BJ (cell line): ENCODE measurements at regions of chr18 and their contacts with region 1.

Region 1: GRCh38 chr18:36296650-36297416 is 680 bp upstream of the FHOD3 start:
- DNase-seq: no peak
- H3K4me3 ChIP-seq: peak overlapping the region; percentile 68
- H3K27me3 ChIP-seq: no peaks in the 10 kb centered on the region
- CTCF ChIP-seq: peak; percentile 71

Region 2: DNA sequence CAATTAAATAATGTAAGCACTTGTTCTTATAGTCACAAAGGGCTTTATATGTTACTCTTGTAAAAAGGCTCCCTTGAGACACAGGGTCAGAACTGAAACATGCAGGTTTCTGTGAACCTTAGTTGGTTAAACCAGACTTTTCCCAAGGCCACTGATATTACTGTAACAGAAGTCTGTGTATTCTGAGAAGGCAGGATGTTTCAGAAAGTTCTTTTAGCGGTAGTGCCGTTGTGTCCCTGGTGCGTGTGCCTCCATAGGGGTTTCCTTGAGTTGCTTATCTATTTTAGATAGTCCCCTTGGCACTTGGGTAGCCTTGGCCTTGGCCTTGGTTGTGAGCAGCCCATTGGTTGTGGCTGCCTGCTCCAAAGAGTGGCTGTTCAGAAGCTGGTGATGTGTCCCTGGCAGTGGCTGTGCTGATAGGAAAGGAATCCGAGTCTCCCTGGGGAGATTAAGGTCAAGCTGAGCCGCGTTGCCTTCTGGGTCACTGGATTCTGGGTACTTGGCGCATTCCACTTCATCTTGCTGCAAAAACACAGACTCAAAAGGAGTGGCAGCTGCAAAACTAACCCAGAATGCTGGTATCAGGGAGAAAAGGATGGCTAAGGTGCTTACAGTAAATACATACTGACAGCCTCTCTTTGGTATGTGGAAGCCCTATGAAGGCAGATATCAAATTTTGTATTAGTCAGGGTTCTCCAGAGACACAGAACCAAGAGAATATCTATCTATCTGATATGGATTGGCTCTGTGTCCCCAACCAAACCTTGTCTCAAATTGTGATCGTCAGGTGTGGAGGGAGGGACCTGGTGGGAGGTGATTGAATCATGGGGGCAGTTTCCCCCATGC is 70.4 kb after region 1 on chr18:
- CTCF ChIA-PET with region 1: no interaction called
- POLR2A ChIA-PET with region 1: interaction called, 18 read pairs
- DNase-seq: no peak
- H3K4me3 ChIP-seq: no peak overlapping the region
- H3K27me3 ChIP-seq: no peaks in the 10 kb centered on the region
- CTCF ChIP-seq: no peak

Region 3: DNA sequence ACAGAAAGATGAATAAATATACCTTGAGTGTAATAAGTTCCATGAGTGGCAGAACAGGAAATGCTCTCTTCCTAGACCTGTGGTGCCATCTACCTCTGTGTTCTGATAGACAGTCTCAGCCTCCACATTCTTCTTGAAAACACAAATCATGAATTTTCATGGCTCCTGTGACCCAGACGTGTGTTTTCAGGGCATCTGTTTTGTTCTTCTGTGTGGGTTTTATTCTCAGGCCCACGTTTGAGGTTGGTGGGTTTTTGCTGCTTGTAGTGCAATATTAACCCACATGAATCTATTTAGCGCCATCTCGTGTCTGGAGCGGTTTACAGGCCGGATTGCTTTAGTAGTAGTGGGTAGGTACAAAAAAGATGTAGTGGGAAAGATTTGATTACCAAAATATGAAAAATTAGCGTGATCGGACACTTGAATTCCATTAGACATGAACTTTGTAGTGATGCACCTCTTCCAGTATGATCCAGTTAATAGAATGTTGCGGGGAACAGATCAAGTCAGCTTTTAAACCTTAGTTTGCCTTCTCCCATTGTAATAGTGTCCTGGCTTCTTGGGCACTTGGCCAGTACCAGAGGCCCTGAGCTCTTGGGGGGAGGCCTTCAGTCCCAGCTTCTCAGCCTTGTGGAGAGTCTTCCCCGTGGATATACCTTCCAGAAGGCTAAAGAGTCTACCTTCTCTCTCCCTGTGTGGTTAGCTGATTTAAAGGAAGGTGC is 275.5 kb after region 1 on chr18:
- CTCF ChIA-PET with region 1: interaction called, 11 read pairs
- POLR2A ChIA-PET with region 1: no interaction called
- DNase-seq: no peak
- H3K4me3 ChIP-seq: no peak overlapping the region
- H3K27me3 ChIP-seq: no peaks in the 10 kb centered on the region
- CTCF ChIP-seq: peak; percentile 72